ENCODE measurements at regions of chr16 and their contacts with region 1.

Region 1: GRCh38 chr16:50368410-50369132 is at the start of gene BRD7:
- DNase-seq: peak in 1 of 2 donors; percentile 75
- H3K4me3 ChIP-seq: peak within 1 kb of the TSS; percentile 90
- H3K27ac ChIP-seq: peak within 1 kb of the TSS; percentile 73 to 77
- H3K4me1 ChIP-seq: peaks cover 5 to 42% of the 10 kb centered on the region in 2 donors
- H3K27me3 ChIP-seq: no peaks in the 10 kb centered on the region
- CTCF ChIP-seq: peak in 1 of 3 experiments; percentile 58
- total RNA-seq, gene BRD7: 17.7 TPM

Region 2: GRCh38 chr16:50024684-50025536 is 343.7 kb before region 1 on chr16 and contains the start of gene CNEP1R1:
- intact Hi-C with region 1: loop called (anchors 1 kb)
- DNase-seq: peak; percentile 81 to 97
- H3K4me3 ChIP-seq: peak within 1 kb of the TSS; percentile 85 to 92
- H3K27ac ChIP-seq: peak within 1 kb of the TSS; percentile 71 to 86
- H3K4me1 ChIP-seq: peaks cover 2 to 7% of the 10 kb centered on the region in 2 donors
- H3K27me3 ChIP-seq: no peaks in the 10 kb centered on the region
- CTCF ChIP-seq: peak; percentile 99 to 100 (median 100)
- total RNA-seq, gene CNEP1R1: 5.9 TPM

Region 3: DNA sequence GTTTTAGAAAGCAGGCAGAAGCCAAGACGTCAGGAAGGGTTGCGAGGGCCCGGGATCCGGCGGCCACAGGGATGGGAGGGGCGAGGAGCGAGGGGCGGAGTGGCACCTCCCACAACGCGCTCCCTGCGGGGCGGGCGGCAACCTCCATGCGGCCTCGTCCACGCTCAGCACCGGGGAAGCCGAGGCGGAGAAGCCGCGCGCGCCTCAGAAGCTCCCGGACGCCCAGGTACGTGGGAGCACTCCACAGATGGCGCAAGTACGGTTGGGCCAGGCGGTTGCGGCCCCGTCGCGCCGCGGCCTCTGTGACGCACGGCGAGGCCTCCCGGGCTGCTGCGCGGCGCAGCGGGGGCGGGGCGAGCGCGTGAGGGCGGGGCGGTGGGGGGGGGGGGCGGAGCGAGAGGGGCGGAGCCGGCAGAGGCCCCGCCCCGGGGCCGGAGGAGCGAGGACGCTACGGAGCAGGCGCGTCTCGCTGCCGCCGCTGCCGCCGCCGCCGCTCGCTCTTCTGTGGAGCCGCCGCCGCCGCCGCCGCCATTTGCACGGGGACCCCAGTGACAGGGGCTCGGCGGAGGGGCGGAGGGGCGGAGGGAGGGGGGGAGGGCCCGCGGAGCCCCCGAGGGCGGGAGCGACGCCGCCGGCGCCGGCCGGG is 215.6 kb before region 1 on chr16 and contains the start of gene TENT4B:
- intact Hi-C with region 1: loop called (anchors 5 kb)
- DNase-seq: peak; percentile 24 to 90
- H3K4me3 ChIP-seq: peak within 1 kb of the TSS; percentile 69 to 90
- H3K27ac ChIP-seq: peak within 1 kb of the TSS; percentile 96
- H3K4me1 ChIP-seq: peaks cover 0 to 17% of the 10 kb centered on the region in 2 donors
- H3K27me3 ChIP-seq: no peaks in the 10 kb centered on the region
- CTCF ChIP-seq: no peak
- total RNA-seq, gene TENT4B: 38.1 TPM

Region 4: DNA sequence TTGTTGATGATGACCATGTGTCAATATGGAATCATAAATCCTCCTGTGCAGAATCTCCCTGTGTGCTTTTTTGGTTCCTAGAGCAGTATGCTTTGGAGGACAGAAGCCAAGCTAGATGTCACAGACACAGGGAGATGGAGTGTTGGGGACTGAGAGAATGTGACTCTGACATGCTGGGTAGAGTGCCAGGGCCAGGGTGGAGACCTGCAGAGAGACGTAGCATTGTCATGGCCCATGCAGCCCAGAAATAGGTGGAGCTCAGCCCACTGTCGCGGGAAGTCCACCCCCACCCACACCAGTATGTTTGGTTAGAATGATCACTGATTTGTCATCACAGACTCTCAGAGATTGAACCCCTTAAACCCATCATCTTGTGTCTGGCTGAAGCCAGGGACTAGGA is 141.5 kb before region 1 on chr16:
- intact Hi-C with region 1: no loop called
- DNase-seq: no peak
- H3K4me3 ChIP-seq: no peak overlapping the region
- H3K27ac ChIP-seq: no peak overlapping the region
- H3K4me1 ChIP-seq: no peaks in the 10 kb centered on the region
- H3K27me3 ChIP-seq: no peaks in the 10 kb centered on the region
- CTCF ChIP-seq: no peak

Region 5: GRCh38 chr16:50245417-50246298 is 122.9 kb before region 1 on chr16:
- intact Hi-C with region 1: loop called (anchors 5 kb)
- DNase-seq: peak in 1 of 2 donors; percentile 81
- H3K4me3 ChIP-seq: peak overlapping the region; percentile 71 to 77
- H3K27ac ChIP-seq: peak overlapping the region in 1 of 2 donors; percentile 13
- H3K4me1 ChIP-seq: peaks cover 7 to 10% of the 10 kb centered on the region in 2 donors
- H3K27me3 ChIP-seq: no peaks in the 10 kb centered on the region
- CTCF ChIP-seq: peak in 1 of 3 experiments; percentile 19

Region 6: GRCh38 chr16:50386139-50386538 is 17.6 kb after region 1 on chr16:
- intact Hi-C with region 1: no loop called
- DNase-seq: no peak
- H3K4me3 ChIP-seq: no peak overlapping the region
- H3K27ac ChIP-seq: no peak overlapping the region
- H3K4me1 ChIP-seq: no peaks in the 10 kb centered on the region
- H3K27me3 ChIP-seq: no peaks in the 10 kb centered on the region
- CTCF ChIP-seq: no peak

Region 7: DNA sequence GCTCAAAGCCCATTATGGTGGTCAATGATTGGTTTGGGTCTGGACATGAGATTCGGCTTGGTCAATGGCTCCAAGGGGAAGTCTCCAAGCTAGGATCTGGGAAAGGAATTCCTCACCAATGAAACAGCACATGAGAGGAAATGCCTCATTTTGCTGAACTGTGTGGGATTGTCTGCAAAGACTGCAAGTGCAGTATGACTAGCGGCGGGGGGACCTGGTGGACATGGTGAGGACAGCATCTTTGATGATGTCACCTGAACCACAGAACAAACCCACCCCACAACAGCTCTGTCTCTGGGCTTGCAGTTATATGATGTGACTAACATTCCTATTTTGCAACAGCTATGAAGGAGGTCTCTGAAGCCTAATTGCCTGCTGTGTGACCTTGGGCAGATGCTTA is 129.0 kb after region 1 on chr16:
- intact Hi-C with region 1: loop called (anchors 2 kb)
- DNase-seq: peak in 1 of 2 donors; percentile 86
- H3K4me3 ChIP-seq: no peak overlapping the region
- H3K27ac ChIP-seq: peak overlapping the region; percentile 83 to 86
- H3K4me1 ChIP-seq: peaks cover 0 to 38% of the 10 kb centered on the region in 2 donors
- H3K27me3 ChIP-seq: no peaks in the 10 kb centered on the region
- CTCF ChIP-seq: no peak

Region 8: DNA sequence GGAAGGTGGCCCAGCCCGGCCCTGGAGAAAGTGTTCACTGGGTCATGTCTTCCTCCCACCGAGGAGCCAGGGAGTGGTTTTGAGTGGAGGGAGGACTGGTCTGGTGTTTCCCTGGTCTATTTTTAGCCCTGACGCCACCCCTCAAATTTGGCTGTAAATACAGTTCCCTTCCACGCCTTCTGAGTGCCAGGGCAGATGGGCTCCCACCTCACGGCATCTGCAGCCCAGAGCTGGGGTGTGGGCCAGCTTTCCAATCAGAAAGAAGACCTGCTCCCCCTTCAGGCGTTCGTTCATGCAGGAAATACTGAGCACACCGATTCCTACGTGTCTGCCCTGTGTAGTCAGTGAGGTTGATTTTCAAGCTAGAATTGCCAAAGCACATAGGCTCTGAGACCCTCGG is 258.8 kb after region 1 on chr16:
- intact Hi-C with region 1: loop called (anchors 2 kb)
- DNase-seq: peak in 1 of 2 donors; percentile 87
- H3K4me3 ChIP-seq: peak overlapping the region in 1 of 2 donors; percentile 10
- H3K27ac ChIP-seq: peak overlapping the region; percentile 57 to 63
- H3K4me1 ChIP-seq: peaks cover 4 to 12% of the 10 kb centered on the region in 2 donors
- H3K27me3 ChIP-seq: no peaks in the 10 kb centered on the region
- CTCF ChIP-seq: peak; percentile 44 to 68 (median 49)

Region 9: DNA sequence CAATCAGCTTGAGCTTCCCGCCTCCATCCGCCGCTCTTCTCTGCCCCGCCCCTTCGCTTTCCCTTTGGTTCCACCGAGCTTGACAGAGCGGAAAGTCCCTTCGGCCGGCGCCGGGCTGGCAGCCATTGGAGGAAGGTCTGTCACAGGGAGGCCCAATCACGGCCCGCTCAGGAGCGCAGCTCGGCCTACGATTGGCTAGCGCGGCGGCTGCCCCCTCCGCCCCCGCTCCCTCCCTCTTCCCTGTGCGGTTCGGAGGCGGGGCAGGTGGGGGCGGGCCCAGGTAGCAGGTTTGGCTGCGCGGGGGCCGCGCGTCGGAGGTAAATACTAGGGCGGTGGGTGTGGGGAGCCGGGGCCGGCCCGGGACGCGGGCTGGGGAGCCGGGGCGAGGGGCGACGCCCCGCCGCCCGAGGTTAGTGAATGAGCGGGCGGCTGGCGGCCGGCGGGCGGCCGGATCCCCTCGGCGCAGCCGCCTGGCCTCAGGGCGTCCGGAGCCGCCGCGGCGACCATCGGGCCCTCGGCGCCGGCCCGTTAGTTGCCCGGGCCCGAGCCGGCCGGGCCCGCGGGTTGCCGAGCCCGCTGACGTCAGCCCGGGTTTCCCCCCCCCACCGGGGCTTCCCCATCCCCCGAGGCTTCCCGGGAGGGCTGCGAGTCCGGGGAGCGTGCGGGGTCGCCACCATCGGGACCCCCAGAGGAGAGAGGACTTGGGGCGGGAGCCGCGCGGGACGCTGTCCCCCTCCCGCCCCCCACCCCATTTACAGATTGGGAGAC is 373.4 kb after region 1 on chr16 and contains the start of gene CYLD:
- intact Hi-C with region 1: loop called (anchors 5 kb)
- DNase-seq: peak; percentile 99 to 100
- H3K4me3 ChIP-seq: peak within 1 kb of the TSS; percentile 69 to 93
- H3K27ac ChIP-seq: peak within 1 kb of the TSS; percentile 86
- H3K4me1 ChIP-seq: peaks cover 0 to 12% of the 10 kb centered on the region in 2 donors
- H3K27me3 ChIP-seq: no peaks in the 10 kb centered on the region
- CTCF ChIP-seq: no peak
- total RNA-seq, gene CYLD: 33.2 TPM